Heart left ventricle (tissue), 16 donors: ENCODE measurements at regions of chr6 and their contacts with region 1.

Region 1: GRCh38 chr6:113858480-113859348 is 1.6 kb downstream of the MARCKS start:
- DNase-seq: peak; percentile 82 to 95 (median 89)
- ATAC-seq: peak; percentile 80 to 95 (median 88)
- H3K4me3 ChIP-seq: peak overlapping the region; percentile 59 to 91 (median 70)
- H3K27ac ChIP-seq: peak overlapping the region; percentile 85 to 96 (median 92)
- H3K4me1 ChIP-seq: peaks cover 0 to 46% (median 10%) of the 10 kb centered on the region in 12 donors
- H3K27me3 ChIP-seq: peaks cover 0 to 15% (median 0%) of the 10 kb centered on the region in 9 donors
- CTCF ChIP-seq: peak; percentile 84 to 99 (median 95)
- POLR2A ChIP-seq: peak in 1 of 2 donors; percentile 76

Region 2: GRCh38 chr6:113065611-113066010 is 793.1 kb before region 1 on chr6:
- intact Hi-C with region 1: loop called in 2 of 10 experiments (anchors 5 kb)
- DNase-seq: peak in 1 of 5 donors; percentile 15
- ATAC-seq: peak; percentile 51 to 81 (median 78)
- H3K4me3 ChIP-seq: no peak overlapping the region
- H3K27ac ChIP-seq: peak overlapping the region in 8 of 12 donors; percentile 2 to 48 (median 33)
- H3K4me1 ChIP-seq: peaks cover 0 to 36% (median 1%) of the 10 kb centered on the region in 12 donors
- H3K27me3 ChIP-seq: no peaks in the 10 kb centered on the region
- CTCF ChIP-seq: no peak
- POLR2A ChIP-seq: no peak

Region 3: GRCh38 chr6:113313841-113314240 is 544.9 kb before region 1 on chr6:
- intact Hi-C with region 1: loop called in 7 of 10 experiments (anchors 2 to 10 kb)
- DNase-seq: no peak
- ATAC-seq: no peak
- H3K4me3 ChIP-seq: no peak overlapping the region
- H3K27ac ChIP-seq: no peak overlapping the region
- H3K4me1 ChIP-seq: peaks cover 0 to 12% (median 0%) of the 10 kb centered on the region in 12 donors
- H3K27me3 ChIP-seq: no peaks in the 10 kb centered on the region
- CTCF ChIP-seq: no peak
- POLR2A ChIP-seq: no peak

Region 4: GRCh38 chr6:113591896-113592827 is 266.6 kb before region 1 on chr6:
- intact Hi-C with region 1: loop called in 1 of 10 experiments (anchors 10 kb)
- DNase-seq: peak in 2 of 5 donors; percentile 21 to 30
- ATAC-seq: no peak
- H3K4me3 ChIP-seq: no peak overlapping the region
- H3K27ac ChIP-seq: peak overlapping the region in 2 of 12 donors; percentile 6 to 26
- H3K4me1 ChIP-seq: peaks cover 0 to 34% (median 15%) of the 10 kb centered on the region in 12 donors
- H3K27me3 ChIP-seq: no peaks in the 10 kb centered on the region
- CTCF ChIP-seq: no peak
- POLR2A ChIP-seq: no peak

Region 5: DNA sequence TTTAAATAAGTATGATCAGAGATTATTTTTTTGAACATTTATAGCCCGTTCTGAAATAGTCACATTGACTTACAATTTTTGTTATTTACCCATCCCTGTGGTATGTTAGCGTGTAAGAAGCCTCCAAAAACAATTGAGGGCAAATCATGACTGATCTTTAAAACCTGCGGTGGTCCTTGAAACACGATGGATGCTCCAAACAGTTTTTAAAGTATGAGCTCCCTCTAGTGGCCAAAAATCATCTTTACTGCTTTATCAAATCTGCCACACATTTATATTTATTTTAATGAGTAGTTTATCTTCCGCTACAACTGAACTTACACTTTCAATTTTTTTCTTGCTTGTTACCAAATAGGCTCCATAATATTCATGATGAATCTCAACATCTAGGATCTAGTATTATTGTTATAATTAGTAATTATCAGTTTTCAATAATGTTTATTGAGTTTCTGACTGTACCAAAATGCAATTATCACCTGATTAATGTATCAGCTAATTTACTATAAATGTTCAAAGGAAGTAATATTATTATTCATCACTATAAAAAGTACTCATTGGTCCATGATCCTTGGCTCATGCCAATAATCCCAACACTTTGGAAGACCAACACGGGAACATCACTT is 50.6 kb after region 1 on chr6:
- intact Hi-C with region 1: loop called in 3 of 10 experiments (anchors 1 to 2 kb)
- DNase-seq: peak in 1 of 5 donors; percentile 20
- ATAC-seq: no peak
- H3K4me3 ChIP-seq: no peak overlapping the region
- H3K27ac ChIP-seq: no peak overlapping the region
- H3K4me1 ChIP-seq: peaks cover 0 to 9% (median 1%) of the 10 kb centered on the region in 12 donors
- H3K27me3 ChIP-seq: no peaks in the 10 kb centered on the region
- CTCF ChIP-seq: peak; percentile 61 to 87 (median 77)
- POLR2A ChIP-seq: no peak